ENCODE measurements at regions of chr1 and their contacts with region 1.

Region 1: GRCh38 chr1:219660666-219661463 is 48.0 kb upstream of the ZC3H11B start:
- DNase-seq: peak; percentile 61 to 93
- ATAC-seq: peak; percentile 96 to 98
- H3K4me3 ChIP-seq: no peak overlapping the region
- H3K27ac ChIP-seq: peak overlapping the region; percentile 45 to 69
- H3K4me1 ChIP-seq: peaks cover 28% of the 10 kb centered on the region
- CTCF ChIP-seq: peak; percentile 91
- EP300 ChIP-seq: no peak
- POLR2A ChIP-seq: no peak
- RAD21 ChIP-seq: peak; percentile 94 to 95

Region 2: GRCh38 chr1:218259800-218260199 is 1401.1 kb before region 1 on chr1:
- CTCF ChIA-PET with region 1: interaction called, 11 read pairs
- POLR2A ChIA-PET with region 1: no interaction called
- DNase-seq: peak; percentile 35 to 44
- ATAC-seq: peak; percentile 50 to 82; a peak in 4 of 6 replicates
- H3K4me3 ChIP-seq: no peak overlapping the region
- H3K27ac ChIP-seq: no peak overlapping the region
- H3K4me1 ChIP-seq: no peaks in the 10 kb centered on the region
- CTCF ChIP-seq: peak; percentile 51
- EP300 ChIP-seq: no peak
- POLR2A ChIP-seq: no peak
- RAD21 ChIP-seq: peak; percentile 54 to 69

Region 3: GRCh38 chr1:218330043-218330623 is 1330.7 kb before region 1 on chr1:
- CTCF ChIA-PET with region 1: interaction called, 27 read pairs
- POLR2A ChIA-PET with region 1: no interaction called
- DNase-seq: peak; percentile 43 to 53
- ATAC-seq: peak in 1 of 2 experiments; percentile 60; a peak in 3 of 6 replicates
- H3K4me3 ChIP-seq: no peak overlapping the region
- H3K27ac ChIP-seq: peak overlapping the region in 1 of 2 experiments; percentile 56; a peak in 3 of 6 replicates
- H3K4me1 ChIP-seq: peaks cover 17% of the 10 kb centered on the region; the same call in 2 of the 3 replicates
- CTCF ChIP-seq: peak; percentile 92
- EP300 ChIP-seq: no peak
- POLR2A ChIP-seq: no peak
- RAD21 ChIP-seq: peak; percentile 95 to 96

Region 4: DNA sequence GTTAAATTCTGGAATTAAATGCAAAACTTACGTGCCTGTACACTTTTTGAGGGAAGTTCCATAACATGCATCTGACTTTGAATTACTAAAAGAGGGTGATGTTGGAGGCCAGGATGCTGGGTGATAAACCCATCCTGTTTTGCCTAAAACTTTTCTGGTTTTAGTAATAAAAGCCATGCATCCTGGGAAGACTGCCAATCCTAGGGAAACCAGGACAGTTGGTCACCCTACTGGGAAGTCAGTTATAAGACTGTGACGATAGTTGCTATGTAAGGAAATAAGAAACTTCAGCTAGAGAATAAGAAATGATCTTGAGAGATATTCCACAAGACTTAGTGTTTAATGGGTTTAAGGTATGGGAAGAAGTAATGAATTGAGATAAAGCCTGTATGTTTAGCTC is 823.8 kb before region 1 on chr1:
- CTCF ChIA-PET with region 1: no interaction called
- POLR2A ChIA-PET with region 1: no interaction called
- DNase-seq: no peak
- ATAC-seq: no peak
- H3K4me3 ChIP-seq: no peak overlapping the region
- H3K27ac ChIP-seq: no peak overlapping the region
- H3K4me1 ChIP-seq: no peaks in the 10 kb centered on the region
- CTCF ChIP-seq: no peak
- EP300 ChIP-seq: no peak
- POLR2A ChIP-seq: no peak
- RAD21 ChIP-seq: no peak

Region 5: DNA sequence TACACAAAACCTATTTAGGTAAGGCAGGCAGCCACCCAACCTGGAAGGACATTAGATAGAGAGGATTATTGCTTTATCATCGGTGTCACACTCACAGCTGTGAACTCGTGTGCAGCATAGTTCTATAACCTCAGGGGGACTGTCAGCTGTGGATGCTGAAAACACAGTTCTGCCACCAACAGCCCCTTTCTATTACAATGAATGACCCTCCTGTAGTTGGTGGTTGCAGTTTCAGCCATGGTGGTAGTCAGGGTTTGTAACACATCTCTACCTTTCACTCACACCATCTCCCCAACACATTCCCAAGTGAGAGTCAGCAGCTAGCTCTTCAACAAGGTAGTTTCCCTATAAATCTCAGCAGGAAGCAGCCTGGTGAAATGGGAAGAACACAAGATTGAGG is 184.7 kb before region 1 on chr1:
- CTCF ChIA-PET with region 1: no interaction called
- POLR2A ChIA-PET with region 1: no interaction called
- DNase-seq: no peak
- ATAC-seq: no peak
- H3K4me3 ChIP-seq: no peak overlapping the region
- H3K27ac ChIP-seq: no peak overlapping the region
- H3K4me1 ChIP-seq: no peaks in the 10 kb centered on the region
- CTCF ChIP-seq: no peak
- EP300 ChIP-seq: no peak
- POLR2A ChIP-seq: no peak
- RAD21 ChIP-seq: no peak

Region 6: GRCh38 chr1:219566951-219567947 is 93.6 kb before region 1 on chr1:
- CTCF ChIA-PET with region 1: interaction called, 21 read pairs
- POLR2A ChIA-PET with region 1: no interaction called
- DNase-seq: peak in 1 of 2 experiments; percentile 69
- ATAC-seq: peak; percentile 77 to 88; a peak in 5 of 6 replicates
- H3K4me3 ChIP-seq: no peak overlapping the region
- H3K27ac ChIP-seq: peak overlapping the region; percentile 23 to 71; a peak in 4 of 6 replicates
- H3K4me1 ChIP-seq: peaks cover 25% of the 10 kb centered on the region
- CTCF ChIP-seq: peak; percentile 88
- EP300 ChIP-seq: no peak
- POLR2A ChIP-seq: no peak
- RAD21 ChIP-seq: peak; percentile 92 to 93

Region 7: GRCh38 chr1:219582865-219583264 is 78.0 kb before region 1 on chr1:
- CTCF ChIA-PET with region 1: interaction called, 11 read pairs
- POLR2A ChIA-PET with region 1: no interaction called
- DNase-seq: no peak
- ATAC-seq: no peak
- H3K4me3 ChIP-seq: no peak overlapping the region
- H3K27ac ChIP-seq: no peak overlapping the region
- H3K4me1 ChIP-seq: peaks cover 7% of the 10 kb centered on the region; the same call in 1 of the 3 replicates
- CTCF ChIP-seq: no peak
- EP300 ChIP-seq: no peak
- POLR2A ChIP-seq: no peak
- RAD21 ChIP-seq: no peak

Region 8: DNA sequence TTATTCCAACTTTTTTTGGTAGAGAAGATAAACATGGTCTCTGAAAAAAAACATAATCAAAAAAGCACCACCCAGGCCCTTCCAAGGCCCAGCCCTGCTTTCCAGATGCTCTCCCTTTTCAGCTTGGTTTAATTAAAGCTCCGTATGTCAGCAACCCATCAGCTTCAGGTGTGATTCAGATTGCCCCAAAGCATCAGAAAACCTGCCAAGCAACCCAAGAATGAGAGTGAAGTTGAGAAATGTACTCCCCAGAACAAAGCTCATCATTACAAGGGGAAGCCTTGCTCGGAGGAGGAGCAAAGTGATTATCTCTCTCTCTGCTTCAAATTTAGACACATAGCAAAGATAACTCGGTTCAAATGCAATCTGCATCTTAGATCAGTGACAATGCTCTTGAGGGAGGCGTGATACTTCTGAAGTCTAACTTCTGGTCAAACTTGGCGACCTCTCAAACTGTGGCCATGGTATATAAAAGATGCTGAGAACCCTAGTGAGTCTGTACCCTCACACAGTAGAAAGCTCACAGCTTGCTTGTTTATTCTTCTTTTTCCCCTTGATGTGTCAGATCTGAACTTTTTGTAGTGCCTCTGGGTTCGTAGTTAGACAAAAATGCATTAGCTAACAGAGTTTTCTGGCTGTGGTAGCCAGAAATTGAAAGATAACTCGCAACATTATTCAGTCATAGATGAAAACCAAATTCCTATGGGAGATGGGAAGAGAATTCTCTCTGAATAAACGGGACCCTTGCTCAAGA is 15.3 kb after region 1 on chr1:
- CTCF ChIA-PET with region 1: interaction called, 11 read pairs
- POLR2A ChIA-PET with region 1: no interaction called
- DNase-seq: no peak
- ATAC-seq: no peak
- H3K4me3 ChIP-seq: no peak overlapping the region
- H3K27ac ChIP-seq: no peak overlapping the region
- H3K4me1 ChIP-seq: no peaks in the 10 kb centered on the region
- CTCF ChIP-seq: no peak
- EP300 ChIP-seq: no peak
- POLR2A ChIP-seq: no peak
- RAD21 ChIP-seq: no peak

Region 9: GRCh38 chr1:219812491-219813203 is 151.8 kb after region 1 on chr1:
- CTCF ChIA-PET with region 1: interaction called, 18 read pairs
- POLR2A ChIA-PET with region 1: no interaction called
- DNase-seq: peak; percentile 77 to 81
- ATAC-seq: peak; percentile 87 to 98
- H3K4me3 ChIP-seq: no peak overlapping the region
- H3K27ac ChIP-seq: no peak overlapping the region
- H3K4me1 ChIP-seq: peaks cover 3% of the 10 kb centered on the region; the same call in 1 of the 3 replicates
- CTCF ChIP-seq: peak; percentile 82
- EP300 ChIP-seq: no peak
- POLR2A ChIP-seq: no peak
- RAD21 ChIP-seq: peak; percentile 92 to 93

Measured in A549 (cell line).